ENCODE measurements at regions of chr9 and their contacts with region 1.

Region 1: DNA sequence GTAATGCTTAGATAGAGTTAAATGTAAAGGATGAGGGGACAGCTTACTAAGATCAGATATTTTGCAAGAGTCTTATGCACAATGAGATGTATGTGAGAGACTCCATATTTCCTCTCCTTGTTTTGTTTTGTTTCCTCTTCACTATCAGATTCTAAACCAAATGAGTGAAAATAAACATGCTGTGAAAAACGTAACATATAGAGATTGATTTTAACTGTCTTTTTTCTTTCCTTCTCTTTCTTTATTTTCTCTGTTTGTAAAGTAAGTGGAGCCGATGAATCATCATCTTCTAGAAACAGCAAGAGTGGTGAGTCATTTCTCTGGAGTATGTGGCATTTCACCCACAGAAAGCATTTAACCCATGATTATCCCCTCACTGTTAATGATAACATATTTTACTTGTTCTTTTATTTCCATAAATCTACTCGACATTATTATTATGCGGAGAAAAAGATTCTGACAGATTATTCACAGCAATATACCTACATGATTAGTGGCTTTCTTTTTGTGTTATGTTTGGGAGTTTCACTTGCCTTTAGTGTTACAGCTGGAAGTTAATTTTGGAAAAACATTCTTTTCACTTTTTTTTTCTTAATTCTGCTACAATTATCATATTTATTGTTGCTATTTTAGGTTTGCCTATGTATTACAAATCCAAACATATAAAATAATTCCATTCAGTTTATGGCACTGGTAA is 2.1 kb upstream of the ANXA1 start:
- DNase-seq: no peak
- H3K4me3 Mint-ChIP-seq: peak overlapping the region; percentile 68
- H3K27ac Mint-ChIP-seq: peak overlapping the region; percentile 95
- H3K4me1 Mint-ChIP-seq: peaks cover 77% of the 10 kb centered on the region
- H3K27me3 Mint-ChIP-seq: no peaks in the 10 kb centered on the region

Region 2: GRCh38 chr9:71683598-71684235 is 1465.8 kb before region 1 on chr9:
- intact Hi-C with region 1: loop called (anchors 10 kb)
- DNase-seq: no peak
- H3K4me3 Mint-ChIP-seq: peak overlapping the region; percentile 72
- H3K27ac Mint-ChIP-seq: peak overlapping the region; percentile 68
- H3K4me1 Mint-ChIP-seq: peaks cover 60% of the 10 kb centered on the region
- H3K27me3 Mint-ChIP-seq: no peaks in the 10 kb centered on the region

Region 3: GRCh38 chr9:71897577-71897976 is 1251.9 kb before region 1 on chr9:
- intact Hi-C with region 1: loop called (anchors 10 kb)
- DNase-seq: no peak
- H3K4me3 Mint-ChIP-seq: peak overlapping the region; percentile 35
- H3K27ac Mint-ChIP-seq: peak overlapping the region; percentile 61
- H3K4me1 Mint-ChIP-seq: peaks cover 88% of the 10 kb centered on the region
- H3K27me3 Mint-ChIP-seq: no peaks in the 10 kb centered on the region

Region 4: DNA sequence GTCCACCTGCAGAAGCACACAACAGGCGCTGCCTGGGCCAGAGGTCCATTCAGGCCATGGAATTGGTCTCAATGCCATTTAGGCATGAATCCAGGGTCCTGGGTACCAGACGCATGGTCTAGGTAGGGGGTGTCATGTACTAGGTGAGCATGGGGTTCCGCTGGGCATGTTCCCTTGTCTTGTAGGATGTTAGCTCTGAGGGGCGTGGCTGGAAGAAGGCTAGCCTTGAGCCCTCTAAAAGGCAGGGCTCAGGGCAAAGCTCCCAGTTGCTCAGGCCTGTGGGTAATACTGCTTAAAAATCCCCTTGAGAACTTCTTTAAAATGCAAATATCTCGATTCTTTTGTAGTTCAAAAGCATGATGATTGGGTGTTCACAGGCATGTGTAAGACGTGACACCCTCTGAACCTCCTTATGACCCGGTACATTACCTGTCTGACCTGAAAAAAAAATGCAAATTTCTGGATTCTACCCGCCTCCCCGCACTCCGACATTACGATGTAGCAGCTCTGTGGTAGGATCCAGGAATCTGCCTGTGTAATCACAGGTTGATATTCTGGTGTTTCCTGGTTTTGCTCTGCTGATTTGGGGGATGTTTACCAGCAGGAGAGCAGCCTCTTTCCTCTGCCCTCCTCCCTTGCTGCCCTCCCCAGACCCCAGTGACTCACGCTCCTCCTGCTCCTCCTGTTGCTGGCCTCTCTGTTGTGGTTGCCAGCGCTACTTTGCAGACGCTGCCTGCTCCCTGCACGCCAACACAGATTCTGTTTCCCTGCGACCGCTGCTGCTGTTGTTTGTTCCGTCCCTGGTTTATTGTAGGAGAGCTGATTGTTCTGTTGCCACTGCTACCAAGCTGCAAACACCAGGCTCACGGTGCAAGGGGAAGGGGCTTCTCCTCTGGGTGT is 622.4 kb before region 1 on chr9:
- intact Hi-C with region 1: loop called (anchors 1 kb)
- DNase-seq: peak; percentile 75
- H3K4me3 Mint-ChIP-seq: peak overlapping the region; percentile 69
- H3K27ac Mint-ChIP-seq: peak overlapping the region; percentile 95
- H3K4me1 Mint-ChIP-seq: peaks cover 66% of the 10 kb centered on the region
- H3K27me3 Mint-ChIP-seq: no peaks in the 10 kb centered on the region

Region 5: GRCh38 chr9:72635197-72635596 is 514.3 kb before region 1 on chr9:
- intact Hi-C with region 1: no loop called
- DNase-seq: no peak
- H3K4me3 Mint-ChIP-seq: no peak overlapping the region
- H3K27ac Mint-ChIP-seq: no peak overlapping the region
- H3K4me1 Mint-ChIP-seq: peaks cover 15% of the 10 kb centered on the region
- H3K27me3 Mint-ChIP-seq: peaks cover 3% of the 10 kb centered on the region

Region 6: DNA sequence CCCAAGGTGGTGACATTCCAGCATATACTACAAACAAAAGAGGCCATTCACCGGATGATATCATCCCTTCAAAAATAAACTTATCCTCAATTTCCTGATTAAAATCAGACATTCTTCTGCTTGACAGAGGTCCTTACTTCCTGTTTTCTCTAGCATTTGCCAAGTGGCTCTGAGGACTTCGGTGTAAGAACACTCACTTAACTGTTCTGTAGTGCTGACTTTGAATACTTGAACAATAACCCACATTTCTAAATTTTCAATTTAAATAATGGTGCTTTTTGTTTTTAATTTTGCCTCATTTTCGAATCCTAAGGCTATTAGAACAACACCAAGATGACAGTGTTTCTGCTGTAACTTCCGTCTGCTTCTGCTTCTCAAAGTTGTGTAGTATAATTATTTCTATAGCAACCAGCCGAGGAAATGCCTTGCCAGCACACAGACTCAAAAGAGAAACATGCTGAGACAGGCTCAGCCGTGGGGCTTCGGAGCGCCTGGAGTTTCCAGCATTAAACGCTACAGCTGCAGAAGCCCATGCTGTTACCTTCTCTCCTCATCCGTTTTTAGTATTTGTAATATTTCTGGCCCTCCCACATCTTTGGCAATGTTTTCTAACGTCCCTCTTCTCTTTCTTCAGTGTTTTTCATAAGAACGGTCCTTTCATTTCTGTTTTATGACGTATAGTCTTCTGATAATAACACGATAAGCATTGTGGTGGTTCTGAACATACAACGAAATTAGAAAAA is 17.3 kb before region 1 on chr9:
- intact Hi-C with region 1: loop called (anchors 1 kb)
- DNase-seq: peak; percentile 73
- H3K4me3 Mint-ChIP-seq: peak overlapping the region; percentile 83
- H3K27ac Mint-ChIP-seq: peak overlapping the region; percentile 98
- H3K4me1 Mint-ChIP-seq: peaks cover 42% of the 10 kb centered on the region
- H3K27me3 Mint-ChIP-seq: no peaks in the 10 kb centered on the region

Region 7: DNA sequence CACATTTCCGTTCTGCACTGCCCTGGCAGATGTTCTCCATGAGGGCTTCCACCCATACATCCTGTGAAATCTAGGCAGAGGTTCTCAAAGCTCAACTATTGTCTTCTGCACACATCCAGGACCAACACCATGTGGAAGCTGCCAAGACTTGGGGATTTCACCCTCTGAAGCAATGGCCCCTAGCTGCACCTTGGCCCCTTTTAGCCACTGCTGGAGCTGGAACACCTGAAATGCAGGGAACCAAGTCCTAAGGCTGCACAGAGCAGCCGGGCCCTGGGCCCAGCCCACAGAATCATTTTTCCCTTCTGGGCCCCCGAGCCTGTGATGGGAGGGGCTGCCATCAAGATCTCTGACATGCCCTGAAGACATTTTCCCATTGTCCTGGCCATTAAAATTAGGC is 230.9 kb after region 1 on chr9:
- intact Hi-C with region 1: no loop called
- DNase-seq: no peak
- H3K4me3 Mint-ChIP-seq: no peak overlapping the region
- H3K27ac Mint-ChIP-seq: no peak overlapping the region
- H3K4me1 Mint-ChIP-seq: no peaks in the 10 kb centered on the region
- H3K27me3 Mint-ChIP-seq: peaks cover 2% of the 10 kb centered on the region

Region 8: DNA sequence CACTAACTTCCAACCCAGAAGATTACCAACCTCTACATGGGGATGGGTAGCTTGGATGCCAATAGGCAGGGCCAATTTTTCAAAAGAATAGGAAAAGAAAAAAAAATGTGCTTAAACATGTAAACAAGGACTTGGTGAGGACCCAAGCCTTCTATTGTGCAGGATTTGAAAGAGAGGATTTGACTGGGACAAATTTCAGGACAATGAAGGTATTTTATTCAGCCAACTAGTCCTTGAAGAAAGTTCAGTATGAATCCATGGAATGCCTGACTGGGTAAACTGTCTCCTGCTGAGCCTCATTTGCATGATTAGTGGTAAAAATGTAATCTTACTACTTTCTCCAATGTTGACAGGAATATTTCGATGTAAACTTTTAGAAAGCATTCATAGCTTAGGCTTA is 1155.1 kb after region 1 on chr9:
- intact Hi-C with region 1: no loop called
- DNase-seq: no peak
- H3K4me3 Mint-ChIP-seq: no peak overlapping the region
- H3K27ac Mint-ChIP-seq: no peak overlapping the region
- H3K4me1 Mint-ChIP-seq: no peaks in the 10 kb centered on the region
- H3K27me3 Mint-ChIP-seq: no peaks in the 10 kb centered on the region

Region 9: DNA sequence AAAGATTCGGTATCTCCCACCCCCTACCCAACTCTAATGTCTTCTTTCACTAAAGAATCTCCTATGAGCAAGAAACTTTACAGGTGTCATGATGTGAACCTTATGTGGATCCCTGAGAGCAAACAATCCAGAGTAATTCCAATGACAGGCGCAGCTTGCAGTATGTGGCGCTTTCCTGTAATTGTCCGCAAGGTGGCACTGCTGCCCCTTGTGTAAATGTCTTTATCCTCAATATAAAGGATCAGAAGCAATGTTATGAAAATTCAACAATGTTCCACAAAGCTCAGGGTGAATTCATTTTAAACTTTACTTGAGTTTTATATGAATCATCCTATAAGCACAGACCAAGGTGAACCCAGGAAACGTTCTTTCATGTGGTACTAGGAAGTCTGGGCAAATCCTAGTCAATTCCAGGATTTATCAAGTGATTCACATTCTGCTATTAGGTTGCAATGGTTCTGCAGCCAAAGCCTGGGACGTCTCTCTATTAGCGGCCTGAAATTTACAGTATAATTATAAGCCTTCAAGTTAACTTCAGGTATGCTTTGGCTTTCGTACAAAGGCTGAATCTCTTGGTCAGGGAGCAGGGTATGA is 1624.5 kb after region 1 on chr9:
- intact Hi-C with region 1: loop called (anchors 5 kb)
- DNase-seq: peak; percentile 47
- H3K4me3 Mint-ChIP-seq: no peak overlapping the region
- H3K27ac Mint-ChIP-seq: no peak overlapping the region
- H3K4me1 Mint-ChIP-seq: peaks cover 20% of the 10 kb centered on the region
- H3K27me3 Mint-ChIP-seq: peaks cover 10% of the 10 kb centered on the region

Region 10: DNA sequence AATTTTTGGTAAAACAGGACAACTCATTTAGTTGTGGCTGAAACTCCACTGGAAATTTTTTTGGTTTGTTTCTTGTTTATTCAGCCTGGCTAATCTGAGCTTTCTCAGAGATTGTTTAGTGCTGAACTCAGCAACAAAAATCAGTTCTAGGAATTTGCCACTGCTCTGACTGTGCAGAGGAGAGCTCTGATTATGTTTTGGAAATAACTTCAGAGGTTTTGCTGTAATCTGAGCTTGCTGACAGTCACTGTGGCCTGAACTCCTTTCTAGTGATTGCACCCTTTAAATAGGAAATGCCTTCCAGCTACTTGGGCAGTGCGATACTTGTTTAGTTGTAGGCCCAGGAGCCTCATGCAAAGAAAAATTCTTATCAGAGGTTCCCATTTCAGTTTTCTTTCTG is 1999.0 kb after region 1 on chr9:
- intact Hi-C with region 1: loop called (anchors 10 kb)
- DNase-seq: peak; percentile 37
- H3K4me3 Mint-ChIP-seq: peak overlapping the region; percentile 62
- H3K27ac Mint-ChIP-seq: peak overlapping the region; percentile 87
- H3K4me1 Mint-ChIP-seq: peaks cover 79% of the 10 kb centered on the region
- H3K27me3 Mint-ChIP-seq: no peaks in the 10 kb centered on the region

Measured in activated T-helper 1 cell treated with anti-CD3 and anti-CD28 coated beads, Interleukin-12 subunit alpha, Interleukin-12 subunit beta, Interleukin-2, Interleukin-4 antibody, amounts not matched to agents 30 ng/mL and 10 ng/mL and 1 ng/mL, durations not matched to agents 14 hours and 24 hours and 36 hours (primary cell).